ENCODE measurements at regions of chr19 and their contacts with region 1.

Region 1: GRCh38 chr19:3801412-3802096 is 15.4 kb upstream of the MATK start:
- DNase-seq: peak in 1 of 2 donors; percentile 36
- H3K4me3 ChIP-seq: peak overlapping the region in 2 of 3 donors; percentile 33 to 60
- H3K27ac ChIP-seq: no peak overlapping the region
- H3K4me1 ChIP-seq: no peaks in the 10 kb centered on the region
- H3K27me3 ChIP-seq: peaks cover 0 to 30% of the 10 kb centered on the region in 2 donors
- CTCF ChIP-seq: no peak
- POLR2A ChIP-seq: no peak

Region 2: DNA sequence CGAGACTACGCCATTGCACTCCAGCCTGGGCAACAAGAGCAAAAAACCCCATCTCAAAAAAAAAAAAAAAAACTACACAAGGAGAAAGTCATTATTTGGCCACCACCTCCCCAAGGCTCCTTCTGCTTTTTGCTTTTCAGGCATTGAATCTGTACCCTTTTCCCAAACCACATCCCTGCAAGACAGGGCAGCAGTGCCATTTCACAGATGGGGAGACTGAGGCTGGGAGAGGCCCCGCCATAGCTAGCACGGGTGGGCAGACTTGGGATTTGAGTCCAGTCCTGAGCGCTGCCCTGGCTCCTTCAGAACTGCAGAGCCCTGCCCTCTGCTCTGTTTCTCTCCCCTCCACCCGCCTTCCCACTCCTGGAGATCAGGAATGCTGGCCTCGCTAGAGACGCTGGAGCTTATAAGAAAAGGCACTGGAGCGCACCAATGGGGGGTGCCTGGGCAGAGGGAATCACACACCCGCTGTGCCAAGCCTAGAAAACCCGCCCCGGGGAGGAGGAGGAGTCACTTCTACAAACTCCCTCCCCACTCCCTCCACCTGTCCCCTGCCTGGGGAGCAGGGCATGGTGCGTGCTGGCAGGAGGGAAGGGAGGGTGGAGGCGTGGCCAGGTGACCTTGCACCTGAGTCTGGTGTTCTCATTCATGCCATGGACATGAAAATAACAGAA is 75.8 kb before region 1 on chr19:
- intact Hi-C with region 1: loop called (anchors 2 kb)
- DNase-seq: peak; percentile 30 to 79
- H3K4me3 ChIP-seq: no peak overlapping the region
- H3K27ac ChIP-seq: no peak overlapping the region
- H3K4me1 ChIP-seq: no peaks in the 10 kb centered on the region
- H3K27me3 ChIP-seq: peaks cover 3 to 16% of the 10 kb centered on the region in 2 donors
- CTCF ChIP-seq: no peak
- POLR2A ChIP-seq: no peak

Measured in breast epithelium (tissue), 4 donors.